ENCODE measurements at regions of chr10 and their contacts with region 1.

Region 1: DNA sequence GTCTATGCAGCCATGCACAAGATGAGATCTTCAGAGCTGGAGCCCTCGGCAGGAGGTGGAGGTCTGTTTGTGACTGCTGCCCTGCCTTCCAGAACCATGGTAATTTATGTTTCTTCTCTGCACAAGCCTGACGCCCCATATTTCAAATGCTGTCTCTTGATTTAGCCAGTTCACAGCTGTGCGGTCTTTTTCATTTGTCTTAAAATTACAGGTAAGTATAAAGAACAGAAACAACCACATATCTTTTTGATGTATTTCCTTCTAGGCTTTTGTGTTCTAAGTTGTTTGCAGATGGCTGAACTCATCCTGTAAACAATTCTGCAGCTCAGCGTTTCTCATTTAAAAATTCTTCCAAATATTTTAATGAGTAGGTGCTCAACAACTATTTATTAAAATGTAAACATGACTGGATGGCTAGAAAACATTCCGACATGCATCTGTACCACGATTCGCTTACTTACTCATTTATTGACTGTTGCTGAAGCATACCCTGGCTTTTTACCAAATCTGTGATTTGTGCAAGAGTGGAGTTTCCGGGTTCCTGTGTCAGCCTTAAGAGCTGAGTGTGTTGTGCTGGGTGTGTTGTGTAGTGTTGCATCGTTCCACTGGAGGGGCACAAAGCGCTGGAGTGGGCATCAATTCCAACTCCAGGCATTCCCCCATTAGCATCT is 58.9 kb downstream of the PIP4K2A start:
- DNase-seq: peak; percentile 75 to 83 (median 80)
- H3K4me3 ChIP-seq: peak overlapping the region; percentile 12 to 40
- H3K4me3 Mint-ChIP-seq: peak overlapping the region; percentile 79 to 94 (median 84)
- H3K27ac ChIP-seq: peak overlapping the region; percentile 61
- H3K27ac Mint-ChIP-seq: peak overlapping the region; percentile 85 to 95 (median 95)
- H3K4me1 ChIP-seq: peaks cover 100% of the 10 kb centered on the region
- H3K4me1 Mint-ChIP-seq: peaks cover 70 to 100% (median 89%) of the 10 kb centered on the region in 4 donors
- H3K27me3 ChIP-seq: no peaks in the 10 kb centered on the region
- H3K27me3 Mint-ChIP-seq: no peaks in the 10 kb centered on the region

Region 2: DNA sequence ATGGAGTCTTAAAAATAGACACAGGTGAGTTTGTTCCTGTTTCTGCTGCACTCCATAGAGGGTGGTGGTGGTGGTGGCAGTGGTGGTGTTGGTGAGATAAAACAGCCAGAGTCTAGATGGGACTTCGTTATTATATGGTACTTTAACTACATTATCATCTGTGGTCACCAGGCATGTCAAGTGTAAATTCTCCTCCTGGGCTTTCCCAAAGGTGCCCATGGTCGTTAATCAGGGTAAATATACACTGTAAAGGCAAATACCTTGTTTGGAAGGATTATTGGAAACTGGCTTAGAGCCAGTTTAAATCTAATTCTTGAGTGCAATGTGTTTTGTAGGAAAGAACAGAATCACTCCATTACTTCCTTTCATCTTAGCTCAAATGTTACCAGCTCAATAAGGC is 360.8 kb before region 1 on chr10:
- CTCF ChIA-PET with region 1: no interaction called
- POLR2A ChIA-PET with region 1: no interaction called
- intact Hi-C with region 1: no loop called
- DNase-seq: no peak
- H3K4me3 ChIP-seq: no peak overlapping the region
- H3K4me3 Mint-ChIP-seq: no peak overlapping the region
- H3K27ac ChIP-seq: no peak overlapping the region
- H3K27ac Mint-ChIP-seq: no peak overlapping the region
- H3K4me1 ChIP-seq: no peaks in the 10 kb centered on the region
- H3K4me1 Mint-ChIP-seq: no peaks in the 10 kb centered on the region
- H3K27me3 ChIP-seq: no peaks in the 10 kb centered on the region
- H3K27me3 Mint-ChIP-seq: peaks cover 13 to 15% of the 10 kb centered on the region in 2 donors

Region 3: DNA sequence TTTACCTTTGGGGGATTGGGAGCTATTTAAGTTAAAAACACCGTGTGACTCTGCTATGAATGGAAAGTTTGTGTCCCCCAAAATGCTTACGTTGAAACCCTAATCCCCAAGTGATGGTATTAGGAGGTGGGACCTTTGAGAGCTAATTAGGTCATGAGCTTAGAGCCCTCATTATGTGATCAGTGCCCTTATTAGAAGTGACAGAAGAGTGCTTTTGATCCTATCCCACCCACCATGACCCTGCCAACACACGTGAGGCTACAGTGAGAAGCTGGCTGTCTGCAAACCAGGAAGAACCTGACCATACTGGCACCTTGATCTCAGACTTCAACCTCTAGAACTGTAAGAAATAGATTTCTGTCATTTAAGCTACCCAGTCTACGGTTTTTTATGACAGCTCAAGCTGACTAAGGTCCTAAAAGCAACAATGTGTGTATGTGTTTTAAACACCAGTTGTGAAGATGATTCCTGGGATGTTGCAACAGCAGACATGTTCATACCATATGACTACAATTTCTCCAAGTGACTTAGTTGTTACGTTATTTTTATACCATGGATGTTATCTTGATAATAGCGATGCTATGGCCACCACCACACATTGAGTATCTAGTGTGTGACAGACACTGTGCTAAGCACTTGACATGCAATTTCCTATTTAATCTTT is 65.5 kb before region 1 on chr10:
- CTCF ChIA-PET with region 1: interaction called, 6 read pairs
- POLR2A ChIA-PET with region 1: no interaction called
- intact Hi-C with region 1: loop called (anchors 2 kb)
- DNase-seq: no peak
- H3K4me3 ChIP-seq: no peak overlapping the region
- H3K4me3 Mint-ChIP-seq: no peak overlapping the region
- H3K27ac ChIP-seq: no peak overlapping the region
- H3K27ac Mint-ChIP-seq: peak overlapping the region in 4 of 7 donors; percentile 35 to 86 (median 67)
- H3K4me1 ChIP-seq: peaks cover 26% of the 10 kb centered on the region
- H3K4me1 Mint-ChIP-seq: peaks cover 36 to 80% (median 56%) of the 10 kb centered on the region in 4 donors
- H3K27me3 ChIP-seq: no peaks in the 10 kb centered on the region
- H3K27me3 Mint-ChIP-seq: no peaks in the 10 kb centered on the region

Region 4: DNA sequence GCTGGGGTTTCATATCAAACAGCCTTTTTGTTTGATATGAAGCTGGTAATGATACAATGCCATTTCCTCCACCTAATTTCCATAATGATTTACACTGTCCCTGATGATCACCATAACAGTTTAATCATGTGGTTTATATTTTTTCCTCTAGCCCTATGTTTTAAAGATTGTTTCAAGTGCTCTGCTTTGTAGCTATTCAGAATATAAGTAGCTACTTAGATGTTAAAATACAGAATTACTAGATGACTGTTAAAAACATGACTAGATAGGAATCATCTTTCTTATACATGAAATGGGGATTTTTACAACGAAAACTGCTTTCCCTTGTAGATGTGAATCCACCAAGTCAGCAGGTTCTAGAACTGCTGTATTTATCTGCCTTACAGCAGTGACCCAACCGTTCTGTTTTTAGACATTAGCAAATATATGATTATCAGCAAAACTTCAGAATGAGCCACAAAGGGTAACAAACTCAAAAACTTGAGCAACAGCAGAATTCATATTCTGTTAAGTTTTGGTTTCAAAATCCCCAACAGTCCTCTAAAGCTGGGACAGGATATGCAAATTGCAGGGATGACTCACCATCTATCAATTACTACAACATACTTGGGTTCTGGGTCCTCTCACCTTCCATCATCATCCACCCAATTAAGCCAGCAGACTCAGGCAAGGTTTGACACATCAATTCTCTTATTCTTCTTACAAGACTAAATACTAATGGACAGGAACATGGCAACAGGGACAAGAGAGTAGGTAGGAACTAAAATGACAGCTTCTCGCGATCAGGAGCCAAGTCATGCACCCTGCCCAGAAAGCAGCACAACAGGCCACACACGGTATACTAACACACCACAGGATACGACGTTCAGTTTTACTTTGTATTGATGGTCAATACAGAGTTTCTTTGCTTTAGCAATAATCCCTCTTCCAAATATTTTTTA is 24.9 kb before region 1 on chr10:
- CTCF ChIA-PET with region 1: interaction called, 15 read pairs
- POLR2A ChIA-PET with region 1: interaction called, 895 read pairs
- intact Hi-C with region 1: loop called (anchors 1 kb)
- DNase-seq: peak; percentile 66 to 86 (median 68)
- H3K4me3 ChIP-seq: peak overlapping the region; percentile 8 to 38
- H3K4me3 Mint-ChIP-seq: peak overlapping the region; percentile 78 to 86 (median 80)
- H3K27ac ChIP-seq: peak overlapping the region; percentile 64
- H3K27ac Mint-ChIP-seq: peak overlapping the region; percentile 87 to 99 (median 96)
- H3K4me1 ChIP-seq: peaks cover 99% of the 10 kb centered on the region
- H3K4me1 Mint-ChIP-seq: peaks cover 82 to 98% (median 94%) of the 10 kb centered on the region in 4 donors
- H3K27me3 ChIP-seq: no peaks in the 10 kb centered on the region
- H3K27me3 Mint-ChIP-seq: no peaks in the 10 kb centered on the region

Region 5: GRCh38 chr10:22676435-22676834 is 21.0 kb after region 1 on chr10:
- CTCF ChIA-PET with region 1: interaction called, 15 read pairs
- POLR2A ChIA-PET with region 1: interaction called, 191 read pairs
- intact Hi-C with region 1: no loop called
- DNase-seq: peak in 1 of 5 donors; percentile 39
- H3K4me3 ChIP-seq: no peak overlapping the region
- H3K4me3 Mint-ChIP-seq: peak overlapping the region in 7 of 8 donors; percentile 9 to 83 (median 71)
- H3K27ac ChIP-seq: peak overlapping the region; percentile 13
- H3K27ac Mint-ChIP-seq: peak overlapping the region; percentile 77 to 97 (median 86)
- H3K4me1 ChIP-seq: peaks cover 97% of the 10 kb centered on the region
- H3K4me1 Mint-ChIP-seq: peaks cover 75 to 97% (median 91%) of the 10 kb centered on the region in 4 donors
- H3K27me3 ChIP-seq: no peaks in the 10 kb centered on the region
- H3K27me3 Mint-ChIP-seq: no peaks in the 10 kb centered on the region

Region 6: GRCh38 chr10:22700489-22700888 is 45.0 kb after region 1 on chr10:
- CTCF ChIA-PET with region 1: interaction called, 3 read pairs
- POLR2A ChIA-PET with region 1: interaction called, 19 read pairs
- intact Hi-C with region 1: no loop called
- DNase-seq: peak in 1 of 5 donors; percentile 29
- H3K4me3 ChIP-seq: no peak overlapping the region
- H3K4me3 Mint-ChIP-seq: peak overlapping the region in 4 of 8 donors; percentile 4 to 66 (median 38)
- H3K27ac ChIP-seq: no peak overlapping the region
- H3K27ac Mint-ChIP-seq: peak overlapping the region; percentile 30 to 90 (median 81)
- H3K4me1 ChIP-seq: peaks cover 99% of the 10 kb centered on the region
- H3K4me1 Mint-ChIP-seq: peaks cover 77 to 93% (median 88%) of the 10 kb centered on the region in 4 donors
- H3K27me3 ChIP-seq: no peaks in the 10 kb centered on the region
- H3K27me3 Mint-ChIP-seq: no peaks in the 10 kb centered on the region

Region 7: GRCh38 chr10:22714479-22715289 is 59.2 kb after region 1 on chr10 and contains the start of gene PIP4K2A:
- CTCF ChIA-PET with region 1: interaction called, 8 read pairs
- POLR2A ChIA-PET with region 1: interaction called, 189 read pairs
- intact Hi-C with region 1: loop called (anchors 1 kb)
- DNase-seq: peak; percentile 71 to 84 (median 81)
- H3K4me3 ChIP-seq: peak within 1 kb of the TSS; percentile 77 to 79
- H3K4me3 Mint-ChIP-seq: peak within 1 kb of the TSS; percentile 87 to 98 (median 96)
- H3K27ac ChIP-seq: peak within 1 kb of the TSS; percentile 88
- H3K27ac Mint-ChIP-seq: peak within 1 kb of the TSS; percentile 88 to 96 (median 92)
- H3K4me1 ChIP-seq: peaks cover 34% of the 10 kb centered on the region
- H3K4me1 Mint-ChIP-seq: peaks cover 28 to 40% (median 31%) of the 10 kb centered on the region in 4 donors
- H3K27me3 ChIP-seq: no peaks in the 10 kb centered on the region
- H3K27me3 Mint-ChIP-seq: no peaks in the 10 kb centered on the region
- total RNA-seq, gene PIP4K2A: 171 to 179 TPM